PC-9 (cell line): ENCODE measurements at regions of chr19 and their contacts with region 1.

Region 1: DNA sequence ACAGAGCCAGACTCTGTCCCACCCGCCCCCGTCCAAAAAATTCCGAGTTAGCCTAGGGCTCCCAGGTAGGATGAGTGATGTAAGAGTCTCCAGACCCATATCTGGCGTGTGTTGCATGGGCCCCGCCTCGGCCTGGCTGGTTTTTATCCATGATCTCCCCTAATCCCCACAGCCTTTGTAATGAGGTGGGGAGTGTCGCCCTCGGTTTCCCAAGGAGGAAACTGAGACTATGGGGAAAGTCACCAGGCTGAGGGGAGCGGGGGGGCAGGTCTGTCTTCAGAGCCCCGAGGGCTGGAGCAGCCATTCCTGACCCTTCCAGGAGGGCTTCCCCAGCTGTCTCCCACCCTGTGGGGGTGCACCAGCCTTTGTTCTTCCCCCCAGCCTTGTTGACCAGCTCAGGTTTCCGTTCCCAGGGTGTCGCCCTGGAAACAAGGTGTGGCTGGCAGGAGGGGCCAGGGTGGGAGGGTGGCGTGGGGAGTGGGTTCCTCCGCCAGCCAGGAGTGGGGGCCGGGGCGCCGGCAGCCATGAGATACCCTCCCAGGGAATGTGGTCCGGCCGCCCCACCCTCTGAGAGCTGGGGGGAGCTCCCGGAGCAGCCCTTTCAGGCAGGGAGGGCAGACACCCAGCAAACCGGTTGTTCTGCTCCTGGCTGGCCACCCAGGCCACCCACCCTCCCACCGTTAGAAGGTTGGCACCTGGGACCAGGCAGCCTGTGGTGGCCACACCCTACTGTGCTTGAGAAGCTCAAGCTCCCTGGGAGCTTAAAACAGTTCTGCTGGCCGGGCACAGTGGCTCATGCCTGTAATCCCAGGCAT is 11.5 kb downstream of the MYH14 start:
- DNase-seq: peak; percentile 99
- H3K4me3 ChIP-seq: peak overlapping the region; percentile 36; the same call in 1 of the 2 replicates
- H3K27ac ChIP-seq: peak overlapping the region; percentile 89
- H3K4me1 ChIP-seq: peaks cover 28% of the 10 kb centered on the region
- H3K27me3 ChIP-seq: no peaks in the 10 kb centered on the region
- CTCF ChIP-seq: no peak

Region 2: DNA sequence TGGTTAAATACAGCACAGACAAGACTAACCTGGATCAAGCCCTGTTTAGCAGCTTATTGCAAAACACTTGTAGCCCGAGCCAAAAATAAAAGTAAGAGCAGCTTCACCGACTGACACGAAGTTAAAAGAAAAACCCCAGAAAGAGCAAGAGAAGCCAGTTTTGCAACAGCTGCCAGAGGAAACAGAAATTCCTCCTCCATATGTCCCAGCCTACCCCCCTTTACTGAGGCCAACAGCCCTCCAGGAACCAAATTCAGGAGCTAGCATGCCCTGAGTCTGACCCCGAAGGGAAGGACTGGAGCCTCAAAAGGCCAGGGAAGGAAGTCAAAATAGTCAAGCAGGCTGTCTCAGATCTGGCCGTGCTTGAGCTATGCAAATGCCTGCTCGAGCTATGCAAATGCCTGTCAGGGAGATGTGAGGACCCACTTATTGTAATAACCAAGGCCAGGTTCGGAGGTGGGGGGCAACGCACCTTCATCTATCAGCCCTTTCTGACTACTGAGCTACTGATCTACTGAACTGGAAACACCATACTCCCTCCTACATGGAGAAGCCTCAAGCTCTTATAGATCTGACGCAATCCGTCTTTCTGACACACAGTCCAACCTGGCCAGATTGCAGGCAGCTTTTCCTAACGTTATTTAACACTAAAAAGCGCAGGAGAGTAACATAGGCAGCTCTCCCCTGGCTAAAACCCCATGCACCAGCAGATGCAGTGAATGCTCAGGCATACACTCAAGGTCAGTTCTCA is 260.7 kb before region 1 on chr19:
- CTCF ChIA-PET with region 1: no interaction called
- POLR2A ChIA-PET with region 1: interaction called, 28 read pairs
- intact Hi-C with region 1: no loop called
- DNase-seq: peak; percentile 31 to 81
- H3K4me3 ChIP-seq: peak overlapping the region; percentile 36; the same call in 1 of the 2 replicates
- H3K27ac ChIP-seq: peak overlapping the region; percentile 61
- H3K4me1 ChIP-seq: peaks cover 36% of the 10 kb centered on the region
- H3K27me3 ChIP-seq: peaks cover 7% of the 10 kb centered on the region
- CTCF ChIP-seq: no peak

Region 3: GRCh38 chr19:50173140-50173539 is 41.8 kb before region 1 on chr19:
- CTCF ChIA-PET with region 1: interaction called, 5 read pairs
- POLR2A ChIA-PET with region 1: interaction called, 21 read pairs
- intact Hi-C with region 1: loop called (anchors 1 kb)
- DNase-seq: peak; percentile 71 to 86
- H3K4me3 ChIP-seq: peak overlapping the region; percentile 36; the same call in 1 of the 2 replicates
- H3K27ac ChIP-seq: peak overlapping the region; percentile 96
- H3K4me1 ChIP-seq: peaks cover 41% of the 10 kb centered on the region
- H3K27me3 ChIP-seq: no peaks in the 10 kb centered on the region
- CTCF ChIP-seq: no peak

Region 4: DNA sequence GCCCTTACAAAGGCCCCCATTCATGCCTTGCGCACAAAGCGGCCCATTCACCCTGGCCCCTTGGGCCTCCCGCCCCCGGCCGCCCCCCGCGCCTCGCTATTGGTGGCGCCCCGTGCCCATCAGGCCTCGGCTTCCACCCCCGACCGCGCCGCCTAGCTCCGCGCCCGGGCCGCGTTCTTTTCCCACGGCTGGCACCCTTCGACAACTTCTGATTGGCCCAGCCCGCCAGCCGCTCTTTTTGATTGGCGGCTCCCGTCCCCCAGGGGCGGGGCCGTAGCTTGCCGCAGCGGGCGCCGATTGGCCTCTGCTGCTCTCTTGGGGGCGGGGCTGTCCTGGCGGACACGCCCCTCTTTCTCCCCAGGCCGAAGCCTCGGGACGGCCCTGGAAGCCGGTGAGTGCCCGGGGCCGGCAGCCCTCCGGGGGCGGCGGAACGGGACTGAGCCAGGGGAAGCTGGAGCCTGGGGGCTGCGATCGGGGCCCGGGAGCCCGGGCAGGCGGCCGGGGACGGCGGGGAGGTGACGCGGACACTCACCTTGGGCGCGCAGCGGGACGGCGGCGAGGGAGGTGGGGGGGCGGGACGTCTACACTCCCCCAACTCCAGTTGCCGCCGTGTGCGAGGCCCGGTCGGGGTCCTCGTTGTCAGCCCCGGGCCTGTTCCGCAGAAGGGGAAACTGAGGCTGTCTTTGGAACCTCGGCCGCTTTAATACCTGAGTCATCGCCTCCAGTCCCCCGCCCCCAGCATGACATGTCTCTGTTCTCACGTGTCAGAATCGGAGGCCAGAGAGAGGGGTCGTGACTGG is 11.5 kb before region 1 on chr19 and contains the start of gene MYH14:
- CTCF ChIA-PET with region 1: interaction called, 8 read pairs
- POLR2A ChIA-PET with region 1: interaction called, 14 read pairs
- intact Hi-C with region 1: loop called (anchors 1 kb)
- DNase-seq: peak; percentile 92 to 98
- H3K4me3 ChIP-seq: peak within 1 kb of the TSS; percentile 82
- H3K27ac ChIP-seq: peak within 1 kb of the TSS; percentile 97
- H3K4me1 ChIP-seq: peaks cover 33% of the 10 kb centered on the region
- H3K27me3 ChIP-seq: no peaks in the 10 kb centered on the region
- CTCF ChIP-seq: no peak
- total RNA-seq, gene MYH14: 115 and 169 TPM in 2 replicates

Region 5: GRCh38 chr19:50266896-50267295 is 51.9 kb after region 1 on chr19:
- CTCF ChIA-PET with region 1: no interaction called
- POLR2A ChIA-PET with region 1: no interaction called
- intact Hi-C with region 1: no loop called
- DNase-seq: no peak
- H3K4me3 ChIP-seq: no peak overlapping the region
- H3K27ac ChIP-seq: no peak overlapping the region
- H3K4me1 ChIP-seq: no peaks in the 10 kb centered on the region
- H3K27me3 ChIP-seq: no peaks in the 10 kb centered on the region
- CTCF ChIP-seq: no peak

Region 6: GRCh38 chr19:50315773-50316448 is 100.9 kb after region 1 on chr19:
- CTCF ChIA-PET with region 1: no interaction called
- POLR2A ChIA-PET with region 1: no interaction called
- intact Hi-C with region 1: no loop called
- DNase-seq: no peak
- H3K4me3 ChIP-seq: no peak overlapping the region
- H3K27ac ChIP-seq: no peak overlapping the region
- H3K4me1 ChIP-seq: 0 out of 2 replicates have a peak, but pooled peaks cover 3% of the 10 kb centered on the region
- H3K27me3 ChIP-seq: peaks cover 9% of the 10 kb centered on the region; the same call in 1 of the 2 replicates
- CTCF ChIP-seq: no peak

Region 7: DNA sequence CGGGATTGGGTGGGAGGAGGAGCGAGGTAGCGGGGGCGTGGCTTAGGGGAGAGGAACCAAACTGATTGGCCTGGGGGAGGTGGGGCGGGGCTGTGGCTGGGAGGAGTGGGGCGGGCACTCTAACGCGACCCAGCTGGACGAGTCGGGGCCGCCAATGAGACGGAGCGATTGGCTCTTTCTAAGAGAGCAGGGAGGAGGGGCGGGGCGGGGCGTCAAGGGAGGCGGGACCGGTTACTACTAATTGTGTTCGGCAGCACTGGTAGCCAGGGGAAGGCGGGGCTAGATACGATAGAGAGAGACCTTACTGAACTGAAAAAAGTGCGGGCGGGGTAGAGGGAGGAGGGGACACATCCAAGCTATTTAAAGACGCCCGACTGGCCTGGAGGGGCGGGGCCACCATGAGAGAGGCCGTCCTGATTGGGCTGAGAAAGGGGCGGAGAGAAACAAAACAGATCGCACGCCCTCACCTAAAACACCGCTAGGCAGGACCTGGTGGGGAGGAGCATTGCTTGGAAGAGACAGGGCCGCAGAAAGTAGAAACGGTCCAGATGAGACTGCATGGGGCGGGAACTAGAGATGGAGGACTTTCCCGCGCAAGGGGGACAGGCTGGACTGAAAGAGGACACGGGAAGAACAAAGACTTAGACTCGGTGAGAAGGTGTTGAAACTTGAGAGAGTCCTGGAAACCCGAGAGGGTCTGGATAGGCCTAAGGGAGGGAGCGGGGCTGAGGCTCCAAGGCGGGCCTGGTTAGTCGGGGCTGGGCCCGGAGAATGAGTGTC is 114.4 kb after region 1 on chr19 and contains the start of gene KCNC3:
- CTCF ChIA-PET with region 1: interaction called, 15 read pairs
- POLR2A ChIA-PET with region 1: interaction called, 14 read pairs
- intact Hi-C with region 1: no loop called
- DNase-seq: peak; percentile 86 to 95
- H3K4me3 ChIP-seq: no peak within 1 kb of the TSS
- H3K27ac ChIP-seq: no peak within 1 kb of the TSS
- H3K4me1 ChIP-seq: peaks cover 22% of the 10 kb centered on the region; the same call in 1 of the 2 replicates
- H3K27me3 ChIP-seq: no peaks in the 10 kb centered on the region; the same call in 1 of the 2 replicates
- CTCF ChIP-seq: no peak
- total RNA-seq, gene KCNC3: 9.0 and 9.4 TPM in 2 replicates

Region 8: DNA sequence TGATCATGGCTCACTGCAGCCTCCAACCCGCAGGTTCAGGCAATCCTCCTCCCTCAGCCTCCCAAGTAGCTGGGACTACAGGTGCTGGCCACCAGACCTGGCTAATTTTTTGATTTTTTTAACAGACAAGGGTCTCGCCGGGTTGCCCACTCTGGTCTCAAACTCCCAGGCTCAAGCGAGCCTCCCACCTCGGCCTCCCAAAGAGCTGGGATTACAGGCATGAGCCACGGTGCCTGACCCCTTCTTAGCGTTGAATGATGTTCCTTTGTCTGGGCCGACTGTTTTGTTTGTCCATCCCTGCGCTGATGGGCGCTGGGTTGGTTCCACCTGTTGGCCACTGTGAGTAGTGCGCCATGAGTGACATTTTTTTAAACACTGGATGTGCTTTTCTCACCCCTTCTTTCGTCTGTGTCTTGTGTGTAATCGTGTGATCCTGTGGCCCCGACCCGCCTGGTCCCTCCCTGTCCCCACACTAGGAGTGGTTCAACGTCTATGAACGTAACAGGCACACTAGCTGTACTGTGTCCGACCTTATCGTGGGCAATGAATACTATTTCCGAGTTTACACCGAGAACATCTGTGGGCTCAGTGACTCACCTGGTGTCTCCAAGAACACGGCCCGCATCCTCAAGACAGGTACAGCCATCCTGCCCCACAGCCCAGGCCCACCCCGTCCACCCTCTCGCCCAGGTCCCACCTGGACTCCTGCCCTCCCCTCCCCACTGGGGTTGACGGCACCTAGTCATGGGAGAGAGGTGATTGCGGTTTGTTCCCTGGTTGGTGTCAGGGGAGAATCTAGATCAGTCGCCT is 246.3 kb after region 1 on chr19:
- CTCF ChIA-PET with region 1: no interaction called
- POLR2A ChIA-PET with region 1: no interaction called
- intact Hi-C with region 1: no loop called
- DNase-seq: peak; percentile 46 to 65
- H3K4me3 ChIP-seq: no peak overlapping the region
- H3K27ac ChIP-seq: no peak overlapping the region
- H3K4me1 ChIP-seq: peaks cover 8% of the 10 kb centered on the region
- H3K27me3 ChIP-seq: peaks cover 23% of the 10 kb centered on the region
- CTCF ChIP-seq: peak; percentile 90

Region 9: DNA sequence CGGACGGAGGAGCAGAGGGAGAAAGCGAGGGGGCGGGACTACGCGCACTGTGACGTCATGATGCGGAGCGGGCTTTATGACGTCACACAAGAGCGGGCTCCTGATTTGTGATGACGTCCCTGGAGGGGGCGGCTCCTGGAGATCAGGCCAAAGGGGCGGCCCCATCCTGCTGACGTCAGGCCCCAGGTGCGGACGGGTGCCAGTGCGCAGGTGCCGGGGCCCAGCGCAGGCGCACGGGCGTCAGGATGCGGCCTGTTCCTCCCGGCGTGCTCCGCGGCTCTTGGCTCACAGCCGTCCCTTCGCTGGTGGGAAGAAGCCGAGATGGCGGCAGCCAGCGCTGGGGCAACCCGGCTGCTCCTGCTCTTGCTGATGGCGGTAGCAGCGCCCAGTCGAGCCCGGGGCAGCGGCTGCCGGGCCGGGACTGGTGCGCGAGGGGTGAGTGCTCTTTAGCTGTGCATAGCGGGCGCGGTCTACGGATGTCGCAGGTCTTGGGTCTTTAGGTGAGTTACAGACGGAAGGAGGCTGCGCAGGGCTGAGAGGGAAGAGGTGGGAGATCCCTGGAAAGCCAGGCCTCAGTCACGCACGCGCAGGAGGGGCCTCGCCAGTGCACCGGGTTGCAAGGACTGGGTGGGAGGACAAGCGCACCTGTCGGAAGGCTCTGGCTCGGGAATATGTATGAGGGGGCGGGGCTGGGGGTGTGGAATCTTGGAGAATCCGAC is 261.4 kb after region 1 on chr19 and contains the starts of genes EMC10 and GARIN5A:
- CTCF ChIA-PET with region 1: no interaction called
- POLR2A ChIA-PET with region 1: no interaction called
- intact Hi-C with region 1: no loop called
- DNase-seq: peak; percentile 90 to 96
- H3K4me3 ChIP-seq: peak within 1 kb of the TSS; percentile 72
- H3K27ac ChIP-seq: peak within 1 kb of the TSS; percentile 65
- H3K4me1 ChIP-seq: peaks cover 8% of the 10 kb centered on the region
- H3K27me3 ChIP-seq: no peaks in the 10 kb centered on the region
- CTCF ChIP-seq: no peak
- total RNA-seq, gene EMC10: 118 and 121 TPM in 2 replicates
- total RNA-seq, gene GARIN5A: 3.7 and 7.3 TPM in 2 replicates